CD8-positive, alpha-beta T cell (primary cell): ENCODE measurements at regions of chr6 and their contacts with region 1.

Region 1: DNA sequence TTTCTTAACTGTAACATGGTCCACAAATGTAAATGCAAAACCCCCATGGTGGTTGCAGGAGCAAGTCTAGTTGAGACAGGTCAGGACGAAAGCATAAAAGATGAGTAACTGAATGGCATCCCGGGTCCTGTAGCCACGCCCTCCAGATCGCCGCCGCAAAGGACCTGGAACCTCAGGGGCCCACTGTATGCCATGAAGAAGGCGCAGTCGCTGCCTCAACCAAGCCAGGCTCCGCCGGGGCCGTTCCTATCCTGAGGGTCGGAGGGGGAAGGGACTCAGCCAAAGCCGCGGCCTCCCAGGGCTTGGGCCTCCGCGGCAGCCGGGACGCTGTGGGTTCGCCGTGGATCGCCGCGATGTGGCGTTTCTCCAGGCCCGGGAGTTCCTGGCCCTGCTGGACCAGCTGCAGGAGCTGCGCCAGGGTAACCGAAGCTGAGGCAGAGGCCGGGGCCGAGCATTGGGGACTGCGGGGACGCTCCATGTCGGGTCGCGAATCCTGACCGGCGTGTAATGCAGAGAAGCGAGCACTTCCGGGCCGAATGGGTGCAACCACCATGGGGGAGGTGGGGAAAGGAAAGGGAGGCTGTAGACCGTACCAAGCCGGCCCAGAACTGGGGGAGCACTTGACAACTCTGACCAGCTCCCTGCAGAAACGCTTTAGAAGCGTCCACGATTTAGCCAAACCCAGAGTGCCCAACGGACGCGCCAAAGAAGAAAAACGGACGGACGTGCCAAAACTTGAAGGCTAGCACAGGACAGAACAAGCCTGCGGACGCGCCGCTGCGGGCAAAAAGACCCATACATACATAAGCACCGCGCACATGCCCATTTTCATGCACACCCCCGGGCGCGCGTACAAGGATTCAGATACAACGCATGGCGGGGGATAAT is 11.1 kb downstream of the RPL7L1 start:
- DNase-seq: peak; percentile 77 to 94 (median 90)
- ATAC-seq: peak; percentile 95
- H3K4me3 ChIP-seq: peak overlapping the region; percentile 92 to 99
- H3K4me3 Mint-ChIP-seq: peak overlapping the region; percentile 92
- H3K27ac ChIP-seq: peak overlapping the region; percentile 91
- H3K27ac Mint-ChIP-seq: peak overlapping the region; percentile 95
- H3K4me1 ChIP-seq: peaks cover 10% of the 10 kb centered on the region
- H3K4me1 Mint-ChIP-seq: peaks cover 19% of the 10 kb centered on the region
- H3K27me3 ChIP-seq: no peaks in the 10 kb centered on the region
- H3K27me3 Mint-ChIP-seq: no peaks in the 10 kb centered on the region
- CTCF ChIP-seq: no peak

Region 2: GRCh38 chr6:41779793-41780545 is 1110.6 kb before region 1 on chr6 and contains the start of gene FRS3:
- CTCF ChIA-PET with region 1: no interaction called
- POLR2A ChIA-PET with region 1: no interaction called
- intact Hi-C with region 1: loop called in 1 of 2 experiments (anchors 2 kb)
- DNase-seq: peak; percentile 96 to 100 (median 99)
- ATAC-seq: peak; percentile 97
- H3K4me3 ChIP-seq: peak within 1 kb of the TSS; percentile 73 to 93
- H3K4me3 Mint-ChIP-seq: peak within 1 kb of the TSS; percentile 93
- H3K27ac ChIP-seq: peak within 1 kb of the TSS in 1 of 2 experiments; percentile 23
- H3K27ac Mint-ChIP-seq: no peak within 1 kb of the TSS
- H3K4me1 ChIP-seq: peaks cover 18% of the 10 kb centered on the region
- H3K4me1 Mint-ChIP-seq: peaks cover 21% of the 10 kb centered on the region
- H3K27me3 ChIP-seq: no peaks in the 10 kb centered on the region
- H3K27me3 Mint-ChIP-seq: peaks cover 4% of the 10 kb centered on the region
- CTCF ChIP-seq: peak; percentile 74
- total RNA-seq, gene FRS3: 3.7 to 6.2 TPM

Region 3: GRCh38 chr6:41895300-41896233 is 995.0 kb before region 1 on chr6 and contains the start of gene USP49:
- CTCF ChIA-PET with region 1: no interaction called
- POLR2A ChIA-PET with region 1: no interaction called
- intact Hi-C with region 1: loop called in 1 of 2 experiments (anchors 10 kb)
- DNase-seq: peak; percentile 80 to 94 (median 91)
- ATAC-seq: peak; percentile 95
- H3K4me3 ChIP-seq: peak within 1 kb of the TSS; percentile 78 to 90
- H3K4me3 Mint-ChIP-seq: no peak within 1 kb of the TSS
- H3K27ac ChIP-seq: peak within 1 kb of the TSS; percentile 55 to 77
- H3K27ac Mint-ChIP-seq: peak within 1 kb of the TSS; percentile 89
- H3K4me1 ChIP-seq: peaks cover 24% of the 10 kb centered on the region
- H3K4me1 Mint-ChIP-seq: peaks cover 10% of the 10 kb centered on the region
- H3K27me3 ChIP-seq: no peaks in the 10 kb centered on the region
- H3K27me3 Mint-ChIP-seq: no peaks in the 10 kb centered on the region
- CTCF ChIP-seq: no peak
- total RNA-seq, gene USP49: 1.6 to 1.8 TPM

Region 4: GRCh38 chr6:42661540-42662153 is 228.9 kb before region 1 on chr6:
- CTCF ChIA-PET with region 1: interaction called, 11 read pairs
- POLR2A ChIA-PET with region 1: interaction called, 5 read pairs
- intact Hi-C with region 1: no loop called
- DNase-seq: peak; percentile 75 to 93 (median 84)
- ATAC-seq: peak; percentile 99
- H3K4me3 ChIP-seq: no peak overlapping the region
- H3K4me3 Mint-ChIP-seq: no peak overlapping the region
- H3K27ac ChIP-seq: no peak overlapping the region
- H3K27ac Mint-ChIP-seq: peak overlapping the region; percentile 2
- H3K4me1 ChIP-seq: no peaks in the 10 kb centered on the region
- H3K4me1 Mint-ChIP-seq: peaks cover 2% of the 10 kb centered on the region
- H3K27me3 ChIP-seq: no peaks in the 10 kb centered on the region
- H3K27me3 Mint-ChIP-seq: no peaks in the 10 kb centered on the region
- CTCF ChIP-seq: peak; percentile 90

Region 5: DNA sequence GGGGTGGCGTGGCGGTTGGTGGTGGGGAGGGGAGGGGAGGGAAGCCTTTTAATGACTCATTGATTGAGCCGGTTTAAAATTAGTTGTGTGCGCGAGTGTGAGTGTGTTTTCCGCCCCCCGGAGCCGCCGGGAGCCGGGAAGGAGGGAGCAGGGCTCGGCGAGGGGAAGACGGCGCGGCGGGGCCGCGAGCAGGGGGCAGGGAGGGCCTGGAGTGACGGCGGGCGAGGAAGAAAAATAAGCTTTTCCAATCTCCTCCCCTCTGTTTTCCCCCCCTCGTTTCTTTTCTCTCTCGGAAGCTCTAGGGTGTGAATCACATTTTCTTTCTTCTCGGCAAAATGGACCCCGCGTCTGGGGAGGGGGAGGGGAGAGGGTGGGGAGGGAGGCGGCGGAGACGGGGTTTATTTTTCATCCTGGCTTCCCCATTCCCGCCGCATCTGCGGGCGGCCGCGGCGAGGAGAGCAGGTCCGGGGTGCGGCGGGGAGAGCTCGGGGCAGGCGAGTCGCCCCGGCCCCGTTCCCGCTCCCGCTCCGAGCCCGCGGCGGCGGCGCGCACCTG is 107.9 kb before region 1 on chr6:
- CTCF ChIA-PET with region 1: no interaction called
- POLR2A ChIA-PET with region 1: interaction called, 12 read pairs
- intact Hi-C with region 1: no loop called
- DNase-seq: peak; percentile 62 to 90 (median 78)
- ATAC-seq: peak; percentile 53
- H3K4me3 ChIP-seq: peak overlapping the region; percentile 74 to 98
- H3K4me3 Mint-ChIP-seq: peak overlapping the region; percentile 96
- H3K27ac ChIP-seq: peak overlapping the region; percentile 100
- H3K27ac Mint-ChIP-seq: peak overlapping the region; percentile 100
- H3K4me1 ChIP-seq: peaks cover 46% of the 10 kb centered on the region
- H3K4me1 Mint-ChIP-seq: peaks cover 26% of the 10 kb centered on the region
- H3K27me3 ChIP-seq: no peaks in the 10 kb centered on the region
- H3K27me3 Mint-ChIP-seq: no peaks in the 10 kb centered on the region
- CTCF ChIP-seq: no peak

Region 6: DNA sequence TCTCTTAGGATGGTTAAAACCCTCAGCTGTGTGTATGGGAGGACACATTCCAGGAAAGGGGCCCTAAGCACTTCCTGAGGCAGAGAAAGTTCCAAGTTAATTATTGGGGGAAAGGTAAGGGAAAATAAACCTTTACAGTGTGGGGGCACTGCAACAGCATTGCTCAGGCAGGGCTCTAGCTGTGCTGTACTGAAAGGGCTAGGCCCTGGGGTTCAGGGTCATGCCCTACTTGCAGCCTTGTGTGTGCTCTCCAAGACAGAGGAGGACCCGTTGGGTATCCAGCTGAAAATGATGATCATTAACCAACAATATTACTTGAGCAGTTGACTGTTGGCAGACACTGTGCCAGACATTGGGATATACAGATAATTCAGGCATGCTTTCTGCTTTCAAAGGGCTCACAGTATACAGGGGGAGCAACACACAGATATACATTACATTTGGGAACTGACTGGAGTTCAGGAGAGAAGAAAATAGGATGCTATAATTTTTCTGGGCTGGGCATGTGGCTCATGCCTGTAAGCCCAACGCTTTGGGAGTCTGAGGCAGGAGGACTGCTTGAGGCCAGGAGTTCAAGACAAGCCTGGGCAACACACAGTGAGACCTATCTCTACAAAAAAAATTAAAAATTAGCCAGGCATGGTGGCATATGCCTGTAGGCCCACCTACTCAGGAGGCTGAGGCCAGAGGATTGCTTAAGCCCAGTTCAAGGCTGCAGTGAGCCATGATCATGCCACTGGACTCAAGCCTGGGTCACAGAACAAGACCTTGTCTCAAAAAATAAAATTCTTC is 20.2 kb before region 1 on chr6:
- CTCF ChIA-PET with region 1: no interaction called
- POLR2A ChIA-PET with region 1: no interaction called
- intact Hi-C with region 1: no loop called
- DNase-seq: no peak
- ATAC-seq: no peak
- H3K4me3 ChIP-seq: no peak overlapping the region
- H3K4me3 Mint-ChIP-seq: no peak overlapping the region
- H3K27ac ChIP-seq: no peak overlapping the region
- H3K27ac Mint-ChIP-seq: peak overlapping the region; percentile 8
- H3K4me1 ChIP-seq: no peaks in the 10 kb centered on the region
- H3K4me1 Mint-ChIP-seq: no peaks in the 10 kb centered on the region
- H3K27me3 ChIP-seq: no peaks in the 10 kb centered on the region
- H3K27me3 Mint-ChIP-seq: no peaks in the 10 kb centered on the region
- CTCF ChIP-seq: no peak

Region 7: DNA sequence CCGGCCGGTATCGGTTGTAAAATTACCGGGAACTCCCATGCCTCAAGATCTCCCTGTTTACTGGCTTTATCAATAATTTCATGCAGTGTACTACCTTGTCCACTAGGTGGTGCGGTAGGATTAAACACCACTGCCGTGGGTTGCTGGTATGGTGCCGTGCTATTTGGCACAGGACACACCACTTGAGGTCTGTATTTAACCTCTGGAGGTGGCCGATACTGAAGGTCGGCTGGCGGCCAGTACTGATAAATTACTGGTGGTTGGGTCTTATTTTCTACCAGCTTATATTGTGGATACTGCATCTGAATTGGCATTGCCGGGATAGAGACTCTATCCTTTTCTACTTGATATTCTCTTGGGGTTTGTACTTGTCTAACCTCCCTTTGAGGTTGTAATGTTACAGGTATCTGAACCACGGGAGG is 11.0 kb after region 1 on chr6:
- CTCF ChIA-PET with region 1: interaction called, 12 read pairs
- POLR2A ChIA-PET with region 1: no interaction called
- intact Hi-C with region 1: no loop called
- DNase-seq: peak; percentile 32 to 89 (median 67)
- ATAC-seq: peak; percentile 100
- H3K4me3 ChIP-seq: no peak overlapping the region
- H3K4me3 Mint-ChIP-seq: peak overlapping the region; percentile 63
- H3K27ac ChIP-seq: no peak overlapping the region
- H3K27ac Mint-ChIP-seq: no peak overlapping the region
- H3K4me1 ChIP-seq: peaks cover 6% of the 10 kb centered on the region
- H3K4me1 Mint-ChIP-seq: peaks cover 17% of the 10 kb centered on the region
- H3K27me3 ChIP-seq: no peaks in the 10 kb centered on the region
- H3K27me3 Mint-ChIP-seq: no peaks in the 10 kb centered on the region
- CTCF ChIP-seq: peak; percentile 92